Gastrocnemius medialis (tissue), 4 donors: ENCODE measurements at regions of chr10 and their contacts with region 1.

Region 1: GRCh38 chr10:80444646-80445319 is 9.3 kb upstream of the TSPAN14 start:
- DNase-seq: peak; percentile 43 to 53
- ATAC-seq: peak; percentile 93
- H3K4me3 ChIP-seq: no peak overlapping the region
- H3K27ac ChIP-seq: peak overlapping the region in 1 of 4 donors; percentile 10
- H3K4me1 ChIP-seq: peaks cover 0 to 12% of the 10 kb centered on the region in 2 donors
- H3K27me3 ChIP-seq: no peaks in the 10 kb centered on the region
- CTCF ChIP-seq: peak; percentile 37 to 95 (median 80)
- POLR2A ChIP-seq: no peak

Region 2: GRCh38 chr10:80356563-80356988 is 88.2 kb before region 1 on chr10 and contains the starts of genes DYDC1 and DYDC2:
- in situ Hi-C with region 1: no loop called
- intact Hi-C with region 1: no loop called
- DNase-seq: no peak
- ATAC-seq: no peak
- H3K4me3 ChIP-seq: peak within 1 kb of the TSS; percentile 33 to 45 (median 42)
- H3K27ac ChIP-seq: no peak within 1 kb of the TSS
- H3K4me1 ChIP-seq: no peaks in the 10 kb centered on the region
- H3K27me3 ChIP-seq: peaks cover 11 to 23% (median 16%) of the 10 kb centered on the region in 3 donors
- CTCF ChIP-seq: no peak
- POLR2A ChIP-seq: no peak
- total RNA-seq, gene DYDC1: not detected
- total RNA-seq, gene DYDC2: not detected

Region 3: GRCh38 chr10:80382989-80383388 is 61.8 kb before region 1 on chr10:
- in situ Hi-C with region 1: loop called in 1 of 4 experiments (anchors 10 kb)
- intact Hi-C with region 1: no loop called
- DNase-seq: no peak
- ATAC-seq: no peak
- H3K4me3 ChIP-seq: no peak overlapping the region
- H3K27ac ChIP-seq: no peak overlapping the region
- H3K4me1 ChIP-seq: peaks cover 0 to 5% of the 10 kb centered on the region in 2 donors
- H3K27me3 ChIP-seq: no peaks in the 10 kb centered on the region
- CTCF ChIP-seq: peak; percentile 18 to 63 (median 49)
- POLR2A ChIP-seq: no peak

Region 4: GRCh38 chr10:80498833-80499741 is 54.3 kb after region 1 on chr10:
- in situ Hi-C with region 1: loop called in 2 of 4 experiments (anchors 5 kb)
- intact Hi-C with region 1: no loop called
- DNase-seq: peak; percentile 85 to 92
- ATAC-seq: peak; percentile 91 to 94
- H3K4me3 ChIP-seq: no peak overlapping the region
- H3K27ac ChIP-seq: peak overlapping the region; percentile 74 to 84 (median 80)
- H3K4me1 ChIP-seq: peaks cover 63 to 82% of the 10 kb centered on the region in 2 donors
- H3K27me3 ChIP-seq: no peaks in the 10 kb centered on the region
- CTCF ChIP-seq: peak in 1 of 5 experiments; percentile 11
- POLR2A ChIP-seq: no peak

Region 5: GRCh38 chr10:80504158-80504811 is 59.5 kb after region 1 on chr10:
- in situ Hi-C with region 1: loop called in 3 of 4 experiments (anchors 5 kb)
- intact Hi-C with region 1: loop called (anchors 1 kb)
- DNase-seq: no peak
- ATAC-seq: no peak
- H3K4me3 ChIP-seq: no peak overlapping the region
- H3K27ac ChIP-seq: peak overlapping the region; percentile 7 to 84 (median 79)
- H3K4me1 ChIP-seq: peaks cover 43 to 71% of the 10 kb centered on the region in 2 donors
- H3K27me3 ChIP-seq: no peaks in the 10 kb centered on the region
- CTCF ChIP-seq: no peak
- POLR2A ChIP-seq: no peak

Region 6: GRCh38 chr10:80509403-80510161 is 64.8 kb after region 1 on chr10:
- in situ Hi-C with region 1: loop called in 3 of 4 experiments (anchors 5 kb)
- intact Hi-C with region 1: loop called (anchors 1 kb)
- DNase-seq: no peak
- ATAC-seq: peak; percentile 43 to 53
- H3K4me3 ChIP-seq: no peak overlapping the region
- H3K27ac ChIP-seq: peak overlapping the region in 3 of 4 donors; percentile 68 to 74 (median 68)
- H3K4me1 ChIP-seq: peaks cover 8 to 20% of the 10 kb centered on the region in 2 donors
- H3K27me3 ChIP-seq: no peaks in the 10 kb centered on the region
- CTCF ChIP-seq: no peak
- POLR2A ChIP-seq: no peak